IMR-90 (cell line): ENCODE measurements at regions of chr11 and their contacts with region 1.

Region 1: DNA sequence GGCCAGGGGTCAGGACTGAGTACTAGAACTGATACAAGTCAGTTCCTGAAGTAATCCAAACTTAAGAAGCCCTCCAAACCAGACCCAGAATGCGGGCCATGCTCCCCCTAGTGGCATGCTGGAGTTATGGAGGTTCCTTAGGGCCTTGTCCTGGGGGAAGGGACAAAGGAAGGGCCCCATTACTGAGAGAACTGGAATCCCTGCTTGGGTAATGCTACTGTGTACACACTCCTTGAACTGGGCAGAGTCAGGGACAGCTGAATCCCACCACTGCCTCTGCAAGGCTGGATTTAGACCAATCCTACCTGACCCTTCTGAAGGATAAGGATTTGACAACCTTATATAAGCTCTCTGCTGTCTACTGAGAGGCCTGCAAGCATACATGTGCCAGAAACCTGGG is 97.3 kb upstream of the AKIP1 start:
- DNase-seq: peak; percentile 89
- ATAC-seq: peak; percentile 65
- H3K4me3 ChIP-seq: no peak overlapping the region
- H3K27ac ChIP-seq: peak overlapping the region; percentile 54; the same call in 1 of the 2 replicates
- H3K4me1 ChIP-seq: peaks cover 28% of the 10 kb centered on the region
- H3K27me3 ChIP-seq: no peaks in the 10 kb centered on the region
- CTCF ChIP-seq: peak; percentile 93
- POLR2A ChIP-seq: no peak
- RAD21 ChIP-seq: peak; percentile 89

Region 2: GRCh38 chr11:8225589-8226036 is 588.0 kb before region 1 on chr11:
- CTCF ChIA-PET with region 1: no interaction called
- POLR2A ChIA-PET with region 1: no interaction called
- dilution Hi-C with region 1: no loop called
- in situ Hi-C with region 1: no loop called
- intact Hi-C with region 1: loop called (anchors 10 kb)
- DNase-seq: peak; percentile 52
- ATAC-seq: peak; percentile 79
- H3K4me3 ChIP-seq: no peak overlapping the region
- H3K27ac ChIP-seq: no peak overlapping the region
- H3K4me1 ChIP-seq: no peaks in the 10 kb centered on the region; the same call in 1 of the 2 replicates
- H3K27me3 ChIP-seq: peaks cover 22% of the 10 kb centered on the region
- CTCF ChIP-seq: peak; percentile 86
- POLR2A ChIP-seq: no peak
- RAD21 ChIP-seq: peak; percentile 85

Region 3: GRCh38 chr11:8688414-8689362 is 125.0 kb before region 1 on chr11:
- CTCF ChIA-PET with region 1: no interaction called
- POLR2A ChIA-PET with region 1: interaction called, 7 read pairs
- dilution Hi-C with region 1: no loop called
- in situ Hi-C with region 1: no loop called
- intact Hi-C with region 1: loop called (anchors 1 kb)
- DNase-seq: peak; percentile 96
- ATAC-seq: peak; percentile 89
- H3K4me3 ChIP-seq: peak overlapping the region; percentile 52
- H3K27ac ChIP-seq: peak overlapping the region; percentile 77
- H3K4me1 ChIP-seq: peaks cover 7% of the 10 kb centered on the region
- H3K27me3 ChIP-seq: no peaks in the 10 kb centered on the region
- CTCF ChIP-seq: peak; percentile 20; the same call in 1 of the 2 replicates
- POLR2A ChIP-seq: peak; percentile 80
- RAD21 ChIP-seq: peak; percentile 40

Region 4: GRCh38 chr11:8826139-8826786 is 12.6 kb after region 1 on chr11:
- CTCF ChIA-PET with region 1: interaction called, 16 read pairs
- POLR2A ChIA-PET with region 1: interaction called, 5 read pairs
- dilution Hi-C with region 1: no loop called
- in situ Hi-C with region 1: no loop called
- intact Hi-C with region 1: no loop called
- DNase-seq: peak; percentile 95
- ATAC-seq: peak; percentile 90
- H3K4me3 ChIP-seq: no peak overlapping the region
- H3K27ac ChIP-seq: peak overlapping the region; percentile 91
- H3K4me1 ChIP-seq: peaks cover 16% of the 10 kb centered on the region
- H3K27me3 ChIP-seq: no peaks in the 10 kb centered on the region
- CTCF ChIP-seq: no peak
- POLR2A ChIP-seq: no peak
- RAD21 ChIP-seq: no peak

Region 5: DNA sequence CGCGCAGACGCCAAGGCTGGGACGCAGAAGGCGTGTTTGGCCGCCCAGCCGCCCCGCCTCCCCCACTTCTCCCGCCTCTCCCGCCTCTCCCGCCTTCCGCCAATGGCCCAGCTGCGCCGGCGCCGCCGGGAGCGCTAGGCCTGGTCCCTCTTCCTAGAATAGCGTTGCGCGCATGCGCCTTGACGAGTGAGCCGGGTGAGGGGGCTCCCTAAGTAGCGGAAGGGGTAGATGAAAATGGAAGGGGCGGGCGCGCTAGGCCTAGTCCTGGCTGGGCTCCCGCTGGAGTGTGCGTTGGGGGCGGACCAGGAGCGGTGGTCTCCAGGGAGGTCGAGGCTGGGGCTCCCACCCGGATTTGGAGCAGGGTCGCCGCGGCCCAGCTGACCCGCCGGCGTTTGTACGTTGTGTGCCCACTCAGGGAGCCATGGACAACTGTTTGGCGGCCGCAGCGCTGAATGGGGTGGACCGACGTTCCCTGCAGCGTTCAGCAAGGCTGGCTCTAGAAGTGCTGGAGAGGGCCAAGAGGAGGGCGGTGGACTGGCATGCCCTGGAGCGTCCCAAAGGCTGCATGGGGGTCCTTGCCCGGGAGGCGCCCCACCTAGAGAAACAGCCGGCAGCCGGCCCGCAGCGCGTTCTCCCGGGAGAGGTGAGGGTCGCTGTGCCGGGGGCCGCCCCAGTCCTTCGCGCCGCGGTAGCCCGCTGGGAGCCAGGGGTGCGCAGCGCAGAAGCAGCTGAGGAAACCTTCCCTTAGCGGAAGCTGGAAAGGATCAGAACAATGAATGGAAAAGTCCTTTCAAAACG is 97.6 kb after region 1 on chr11 and contains the start of gene AKIP1:
- CTCF ChIA-PET with region 1: interaction called, 3 read pairs
- POLR2A ChIA-PET with region 1: interaction called, 5 read pairs
- dilution Hi-C with region 1: no loop called
- in situ Hi-C with region 1: no loop called
- intact Hi-C with region 1: loop called (anchors 5 kb)
- DNase-seq: peak; percentile 94
- ATAC-seq: peak; percentile 92
- H3K4me3 ChIP-seq: peak within 1 kb of the TSS; percentile 91
- H3K27ac ChIP-seq: peak within 1 kb of the TSS; percentile 97
- H3K4me1 ChIP-seq: peaks cover 11% of the 10 kb centered on the region
- H3K27me3 ChIP-seq: no peaks in the 10 kb centered on the region
- CTCF ChIP-seq: no peak
- POLR2A ChIP-seq: 0 out of 2 replicates have a peak, but pooled peaks have one; percentile 24
- RAD21 ChIP-seq: 0 out of 2 replicates have a peak, but pooled peaks have one; percentile 3
- total RNA-seq, gene AKIP1: 27.8 and 33.9 TPM in 2 replicates